Kidney (tissue), 22 donors: ENCODE measurements at regions of chr1 and their contacts with region 1.

Region 1: DNA sequence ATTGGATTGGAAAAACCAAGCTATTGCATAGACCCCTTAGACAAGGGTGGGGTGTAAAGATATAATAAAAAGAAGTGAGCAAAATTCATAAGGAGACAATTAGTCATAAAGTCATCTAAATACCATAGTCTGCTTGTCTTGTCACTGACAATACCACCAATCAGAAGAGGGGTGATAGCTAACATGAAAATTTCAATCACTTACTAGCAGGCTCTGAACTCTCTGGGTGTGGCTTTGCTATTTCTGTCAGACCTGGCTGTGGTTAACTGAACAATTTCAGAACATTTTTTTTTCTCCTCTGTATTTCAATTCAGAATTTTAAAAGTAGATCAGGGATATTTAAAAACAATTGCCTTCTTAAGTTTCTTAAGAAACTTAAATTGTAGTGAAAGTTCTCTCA is 158.5 kb upstream of the PRMT6 start:
- DNase-seq: no peak
- H3K4me3 ChIP-seq: no peak overlapping the region
- H3K27ac ChIP-seq: no peak overlapping the region
- H3K4me1 ChIP-seq: no peaks in the 10 kb centered on the region
- H3K27me3 ChIP-seq: no peaks in the 10 kb centered on the region
- CTCF ChIP-seq: no peak

Region 2: DNA sequence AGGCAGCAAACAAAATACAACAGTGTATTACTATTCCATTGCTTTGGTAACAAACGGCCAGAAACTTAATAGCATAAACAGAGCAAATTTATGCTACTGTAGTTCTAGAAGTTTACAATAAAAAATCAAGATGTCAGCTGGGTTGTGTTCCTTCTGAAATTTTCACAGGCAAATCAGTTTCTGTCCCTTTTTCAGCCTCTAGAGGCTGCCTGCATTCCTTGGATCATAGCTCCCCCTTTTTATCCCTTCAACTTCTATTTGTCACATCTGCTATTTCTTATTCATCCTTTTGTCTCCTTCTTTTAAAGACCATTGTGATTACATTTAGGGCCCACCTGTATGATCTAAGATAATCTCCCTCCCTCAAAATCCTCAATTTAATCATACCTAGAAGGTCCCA is 250.7 kb before region 1 on chr1:
- intact Hi-C with region 1: loop called (anchors 5 kb)
- DNase-seq: no peak
- H3K4me3 ChIP-seq: no peak overlapping the region
- H3K27ac ChIP-seq: no peak overlapping the region
- H3K4me1 ChIP-seq: no peaks in the 10 kb centered on the region
- H3K27me3 ChIP-seq: no peaks in the 10 kb centered on the region
- CTCF ChIP-seq: no peak